Heart left ventricle (tissue), 16 donors: ENCODE measurements at regions of chr12 and their contacts with region 1.

Region 1: DNA sequence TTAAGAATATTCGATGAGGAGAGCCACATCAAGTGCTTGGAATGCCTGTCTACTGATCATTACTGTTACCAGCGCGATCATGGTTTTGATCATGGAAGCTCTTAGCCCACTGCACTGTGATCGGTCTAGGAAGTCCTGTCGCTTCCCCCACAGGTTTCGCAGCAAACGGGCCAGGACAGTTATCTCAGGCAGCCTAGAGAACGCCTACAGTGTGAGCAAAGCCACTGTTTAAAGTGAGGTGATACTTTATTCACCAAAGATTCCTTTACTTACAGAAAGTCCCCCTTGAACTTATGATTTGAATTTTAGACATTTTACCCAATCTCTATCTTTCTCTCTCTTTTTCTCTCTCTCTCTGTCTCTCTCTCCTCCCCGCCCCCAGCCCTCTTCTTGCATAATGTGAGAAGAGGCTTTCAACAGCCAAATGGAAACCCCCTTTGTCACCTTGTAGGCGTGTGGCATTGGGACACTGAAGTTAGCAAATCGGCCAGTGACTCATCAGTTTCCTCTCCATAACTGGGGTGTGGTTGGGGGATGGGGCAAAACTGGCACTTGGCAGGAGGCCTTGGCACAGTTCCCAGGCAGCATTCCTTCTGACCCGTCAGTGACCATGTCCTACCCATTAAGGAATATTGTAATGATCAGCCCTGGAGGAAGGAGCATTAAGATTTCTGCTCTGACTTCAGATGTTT is 214.8 kb downstream of the CHST11 start:
- DNase-seq: peak; percentile 82 to 91 (median 83)
- ATAC-seq: peak; percentile 22 to 72 (median 58)
- H3K4me3 ChIP-seq: peak overlapping the region in 1 of 12 donors; percentile 4
- H3K27ac ChIP-seq: peak overlapping the region in 11 of 12 donors; percentile 42 to 89 (median 71)
- H3K4me1 ChIP-seq: peaks cover 3 to 81% (median 57%) of the 10 kb centered on the region in 12 donors
- H3K27me3 ChIP-seq: no peaks in the 10 kb centered on the region
- CTCF ChIP-seq: no peak
- POLR2A ChIP-seq: no peak

Region 2: DNA sequence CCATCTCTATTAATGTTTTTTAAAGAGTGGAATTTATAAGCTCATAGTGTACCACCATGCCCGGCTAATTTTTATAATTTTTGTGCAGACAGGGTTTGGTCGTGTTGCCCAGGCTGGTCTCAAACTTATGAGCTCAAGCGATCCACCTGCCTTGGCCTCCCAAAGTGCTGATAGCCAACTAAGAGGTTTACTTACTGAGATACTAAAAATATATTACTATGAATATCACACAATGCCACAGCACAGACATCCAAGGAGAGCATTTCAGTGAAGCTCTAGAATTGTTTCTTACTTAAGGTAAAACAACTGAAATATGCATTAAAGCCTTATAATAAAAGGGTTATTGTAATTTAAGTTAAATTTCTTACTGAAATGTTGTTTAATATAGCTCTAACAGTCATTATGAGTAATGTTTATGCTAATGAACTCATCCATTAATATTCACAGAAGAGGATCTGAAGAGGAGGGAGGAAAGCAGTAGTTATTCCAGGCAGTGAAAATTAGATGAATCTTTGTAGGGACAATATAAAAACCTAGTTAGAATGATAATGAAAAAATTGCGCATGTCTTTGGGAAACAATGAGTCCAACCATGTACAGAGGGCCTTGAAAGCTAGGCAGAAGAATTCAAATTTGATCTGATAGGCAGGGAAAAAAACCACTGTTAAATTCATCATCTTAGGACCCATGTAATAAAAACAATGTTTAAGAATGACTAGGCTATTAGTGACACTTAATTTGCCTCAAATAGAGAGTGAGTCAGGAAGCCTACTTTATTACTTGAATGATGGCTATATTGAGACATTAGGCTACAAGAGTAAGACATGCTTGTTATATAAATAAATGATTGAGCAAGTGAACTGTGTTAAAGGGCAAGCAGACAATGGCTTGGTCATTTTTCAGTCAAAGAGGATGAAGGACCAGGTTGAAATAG is 187.3 kb after region 1 on chr12:
- intact Hi-C with region 1: loop called in 3 of 10 experiments (anchors 5 to 10 kb)
- DNase-seq: no peak
- ATAC-seq: peak in 3 of 4 donors; percentile 58 to 73 (median 61)
- H3K4me3 ChIP-seq: no peak overlapping the region
- H3K27ac ChIP-seq: peak overlapping the region in 10 of 12 donors; percentile 6 to 66 (median 35)
- H3K4me1 ChIP-seq: peaks cover 0 to 21% (median 5%) of the 10 kb centered on the region in 12 donors
- H3K27me3 ChIP-seq: no peaks in the 10 kb centered on the region
- CTCF ChIP-seq: no peak
- POLR2A ChIP-seq: no peak

Region 3: GRCh38 chr12:104865080-104865479 is 193.5 kb after region 1 on chr12:
- intact Hi-C with region 1: loop called in 1 of 10 experiments (anchors 10 kb)
- DNase-seq: no peak
- ATAC-seq: no peak
- H3K4me3 ChIP-seq: no peak overlapping the region
- H3K27ac ChIP-seq: no peak overlapping the region
- H3K4me1 ChIP-seq: peaks cover 0 to 26% (median 7%) of the 10 kb centered on the region in 12 donors
- H3K27me3 ChIP-seq: no peaks in the 10 kb centered on the region
- CTCF ChIP-seq: no peak
- POLR2A ChIP-seq: no peak